ENCODE measurements at regions of chr12 and their contacts with region 1.

Region 1: DNA sequence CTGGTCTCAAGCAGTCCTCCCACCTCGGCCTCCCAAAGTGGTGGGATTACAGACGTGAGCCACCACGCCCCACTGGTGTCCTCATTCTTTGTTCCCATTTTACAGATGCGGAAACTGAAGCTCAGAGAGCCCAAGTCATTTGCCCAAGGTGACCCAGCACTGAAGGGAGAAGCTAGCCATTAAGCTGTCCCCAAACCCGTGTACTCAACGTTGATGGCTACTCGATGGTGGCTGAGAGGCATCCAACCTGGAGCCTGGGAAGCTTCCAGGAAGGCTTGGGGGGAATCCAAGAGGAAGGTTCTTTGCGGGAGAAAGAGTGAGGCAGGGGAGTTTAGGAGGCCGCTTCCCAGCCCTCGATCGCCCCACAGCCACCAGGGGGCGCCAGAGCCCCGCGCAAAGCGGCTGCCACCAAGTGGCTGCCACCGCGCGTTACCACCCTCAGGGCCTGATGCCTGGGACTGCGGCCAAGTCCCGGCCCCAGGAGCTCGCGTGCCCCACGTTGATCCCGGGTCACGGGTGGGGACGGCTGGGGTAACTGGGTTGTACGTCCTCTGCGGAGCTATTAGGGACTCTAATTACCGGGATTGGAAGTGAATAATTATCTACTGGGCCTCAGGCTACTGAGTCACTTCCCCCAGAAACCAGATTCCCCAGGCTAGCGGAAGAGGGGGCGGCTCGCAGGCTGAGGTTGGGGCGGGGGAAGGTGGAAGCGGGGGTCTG is 8.8 kb upstream of the SH2B3 start:
- DNase-seq: peak; percentile 75 to 99 (median 87)
- ATAC-seq: peak; percentile 92
- H3K4me3 ChIP-seq: peak overlapping the region; percentile 8 to 19
- H3K27ac ChIP-seq: peak overlapping the region in 1 of 2 donors; percentile 63
- H3K4me1 ChIP-seq: peaks cover 0 to 51% of the 10 kb centered on the region in 2 donors
- H3K27me3 ChIP-seq: no peaks in the 10 kb centered on the region
- CTCF ChIP-seq: peak; percentile 98 to 99

Region 2: GRCh38 chr12:111451649-111452129 is 54.8 kb after region 1 on chr12:
- intact Hi-C with region 1: loop called in 1 of 2 experiments (anchors 5 kb)
- DNase-seq: peak in 2 of 4 donors; percentile 35 to 36
- ATAC-seq: peak; percentile 51
- H3K4me3 ChIP-seq: no peak overlapping the region
- H3K27ac ChIP-seq: peak overlapping the region in 1 of 2 donors; percentile 16
- H3K4me1 ChIP-seq: peaks cover 0 to 48% of the 10 kb centered on the region in 2 donors
- H3K27me3 ChIP-seq: no peaks in the 10 kb centered on the region
- CTCF ChIP-seq: peak; percentile 67 to 78

Measured in left lung (tissue), 14 donors.